Right ventricle myocardium inferior (tissue), 1 donor: ENCODE measurements at regions of chr6 and their contacts with region 1.

Region 1: DNA sequence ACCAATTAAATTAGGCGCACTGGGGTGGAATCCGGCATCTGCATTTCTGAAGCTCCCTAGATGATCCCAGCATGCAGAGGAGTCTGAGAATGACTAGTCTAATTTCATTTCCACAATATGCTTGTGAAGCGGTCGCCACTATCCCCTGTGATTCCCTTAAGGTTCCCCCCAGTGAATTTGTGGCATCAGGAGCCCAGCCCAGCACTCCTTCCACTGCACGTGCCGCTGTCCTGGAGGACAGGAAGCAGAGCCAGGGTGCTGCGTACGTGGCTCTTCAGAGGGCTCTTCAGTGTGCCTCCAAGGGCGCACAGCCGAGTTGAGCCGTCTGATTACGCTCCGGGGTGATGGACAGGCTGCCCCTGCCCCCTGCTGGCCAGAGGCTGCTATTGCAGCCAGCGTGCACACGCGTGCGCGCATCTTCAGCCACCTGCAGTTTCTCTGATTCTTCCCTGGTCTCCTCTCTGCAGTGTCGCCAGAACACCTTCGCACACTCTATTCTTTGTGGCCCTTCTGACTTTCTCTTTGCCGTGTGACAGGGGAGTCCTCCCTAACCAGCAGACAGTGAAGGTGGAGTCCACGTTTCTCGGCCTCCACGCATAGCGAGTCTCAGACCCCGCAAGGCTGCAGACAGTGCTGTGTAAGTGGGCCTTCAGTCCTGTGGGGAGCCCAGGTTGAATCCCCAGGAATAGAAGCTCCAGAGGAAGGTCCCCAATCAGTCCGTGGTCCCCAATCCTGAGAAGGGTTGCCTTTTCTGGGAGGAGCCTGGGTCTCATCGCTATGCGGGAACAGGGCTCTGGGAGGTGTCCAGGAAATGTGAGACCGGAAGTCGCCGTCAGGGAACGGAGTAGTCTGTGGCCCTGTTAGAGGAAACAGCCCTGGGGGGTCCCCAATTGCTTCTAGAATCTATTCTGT is 16.5 kb upstream of the NCR2 start:
- DNase-seq: peak; percentile 95
- ATAC-seq: peak; percentile 95

Region 2: DNA sequence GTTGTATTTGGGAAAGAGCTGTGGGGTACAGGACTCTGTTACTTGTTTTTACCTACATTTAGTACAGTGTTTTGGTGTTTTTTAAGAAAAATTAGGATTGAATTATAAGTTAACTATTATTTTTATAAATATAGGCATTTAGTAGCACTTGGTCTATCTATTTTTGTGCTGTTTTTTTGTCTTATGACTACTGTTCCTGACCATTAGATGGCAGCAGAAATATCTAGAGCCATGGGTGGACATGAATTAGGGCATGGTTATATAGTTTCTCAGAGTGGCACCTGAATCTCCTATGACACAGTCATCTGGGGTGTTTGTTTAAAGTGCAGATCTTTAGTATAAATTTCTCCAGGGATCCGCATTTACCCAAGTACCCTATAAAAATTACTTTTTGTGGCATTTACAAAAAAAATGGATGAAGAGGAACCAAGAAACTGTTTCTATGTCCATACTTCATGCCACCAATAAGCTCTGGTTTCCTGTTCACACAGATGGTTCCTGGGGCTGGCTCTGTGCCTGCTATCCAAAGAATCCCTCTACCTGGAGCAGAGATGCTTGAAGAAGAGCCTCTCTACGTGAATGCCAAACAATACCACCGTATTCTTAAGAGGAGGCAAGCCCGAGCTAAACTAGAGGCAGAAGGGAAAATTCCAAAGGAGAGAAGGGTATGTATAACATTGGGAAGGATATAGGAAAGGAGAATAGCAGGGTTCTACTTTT is 226.3 kb before region 1 on chr6:
- intact Hi-C with region 1: loop called (anchors 10 kb)
- DNase-seq: no peak
- ATAC-seq: no peak

Region 3: GRCh38 chr6:41167173-41167963 is 151.5 kb before region 1 on chr6:
- intact Hi-C with region 1: no loop called
- DNase-seq: no peak
- ATAC-seq: no peak

Region 4: DNA sequence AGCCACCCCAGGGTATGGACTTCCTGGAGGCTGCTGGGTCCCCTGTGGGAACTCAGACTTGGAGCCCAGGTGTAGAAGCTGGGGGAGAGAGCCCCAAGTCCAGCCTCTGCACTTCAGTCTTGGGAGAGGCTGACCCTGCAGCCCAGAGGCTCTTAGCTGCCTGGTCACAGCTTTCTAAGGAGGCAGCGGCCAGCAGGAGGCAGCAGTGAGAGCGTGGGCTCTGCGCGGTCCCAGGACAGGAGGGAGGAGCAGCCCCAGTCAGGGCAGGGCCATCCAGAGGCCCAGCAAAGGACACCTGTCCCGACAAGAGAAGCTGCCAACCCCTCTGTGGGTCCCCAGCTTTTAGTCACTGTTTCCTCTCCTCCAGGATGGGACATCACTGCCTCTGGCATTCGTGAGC is 127.3 kb before region 1 on chr6:
- intact Hi-C with region 1: loop called (anchors 5 kb)
- DNase-seq: peak; percentile 74
- ATAC-seq: peak; percentile 53